Activated B cell treated with CpG ODN at 0.5 μM for 24 hours (primary cell): ENCODE measurements at regions of chrX and their contacts with region 1.

Region 1: GRCh38 chrX:41110801-41111625 is 25.8 kb downstream of the USP9X start:
- DNase-seq: no peak
- ATAC-seq: no peak
- H3K4me3 Mint-ChIP-seq: no peak overlapping the region
- H3K27ac Mint-ChIP-seq: peak overlapping the region; percentile 74
- H3K4me1 Mint-ChIP-seq: peaks cover 63% of the 10 kb centered on the region
- H3K27me3 Mint-ChIP-seq: no peaks in the 10 kb centered on the region
- CTCF ChIP-seq: no peak

Region 2: GRCh38 chrX:40188573-40189432 is 922.2 kb before region 1 on chrX:
- CTCF ChIA-PET with region 1: no interaction called
- POLR2A ChIA-PET with region 1: no interaction called
- intact Hi-C with region 1: no loop called
- DNase-seq: no peak
- ATAC-seq: no peak
- H3K4me3 Mint-ChIP-seq: no peak overlapping the region
- H3K27ac Mint-ChIP-seq: no peak overlapping the region
- H3K4me1 Mint-ChIP-seq: peaks cover 7% of the 10 kb centered on the region
- H3K27me3 Mint-ChIP-seq: no peaks in the 10 kb centered on the region
- CTCF ChIP-seq: no peak

Region 3: DNA sequence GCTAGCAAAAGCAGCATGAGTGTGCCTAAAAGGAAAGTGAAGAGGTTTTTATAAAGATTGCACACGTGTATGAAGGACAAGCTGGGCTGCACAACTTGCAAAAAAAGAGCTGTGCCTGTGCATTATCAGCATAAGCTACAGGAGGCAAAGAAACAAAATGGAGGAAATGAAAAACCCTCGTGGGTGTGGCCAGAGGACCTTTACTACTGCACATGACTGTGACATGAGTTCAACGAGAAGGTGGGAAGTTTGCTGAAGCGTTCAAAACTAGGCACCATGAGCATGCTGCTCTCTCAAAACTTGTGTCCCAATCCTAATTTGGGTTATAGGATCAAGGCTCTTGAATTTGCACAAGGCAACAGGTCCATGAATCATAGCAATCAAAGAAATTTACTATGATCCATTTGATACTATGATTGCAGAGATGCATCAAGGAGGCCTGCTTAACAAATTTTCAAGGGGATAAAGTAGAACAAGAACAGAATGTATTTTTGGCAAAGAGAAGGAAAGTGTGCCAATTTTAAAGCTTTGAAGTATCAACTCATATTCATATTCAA is 425.6 kb before region 1 on chrX:
- CTCF ChIA-PET with region 1: no interaction called
- POLR2A ChIA-PET with region 1: no interaction called
- intact Hi-C with region 1: no loop called
- DNase-seq: no peak
- ATAC-seq: peak; percentile 87
- H3K4me3 Mint-ChIP-seq: peak overlapping the region; percentile 2
- H3K27ac Mint-ChIP-seq: peak overlapping the region; percentile 56
- H3K4me1 Mint-ChIP-seq: peaks cover 22% of the 10 kb centered on the region
- H3K27me3 Mint-ChIP-seq: no peaks in the 10 kb centered on the region
- CTCF ChIP-seq: no peak

Region 4: DNA sequence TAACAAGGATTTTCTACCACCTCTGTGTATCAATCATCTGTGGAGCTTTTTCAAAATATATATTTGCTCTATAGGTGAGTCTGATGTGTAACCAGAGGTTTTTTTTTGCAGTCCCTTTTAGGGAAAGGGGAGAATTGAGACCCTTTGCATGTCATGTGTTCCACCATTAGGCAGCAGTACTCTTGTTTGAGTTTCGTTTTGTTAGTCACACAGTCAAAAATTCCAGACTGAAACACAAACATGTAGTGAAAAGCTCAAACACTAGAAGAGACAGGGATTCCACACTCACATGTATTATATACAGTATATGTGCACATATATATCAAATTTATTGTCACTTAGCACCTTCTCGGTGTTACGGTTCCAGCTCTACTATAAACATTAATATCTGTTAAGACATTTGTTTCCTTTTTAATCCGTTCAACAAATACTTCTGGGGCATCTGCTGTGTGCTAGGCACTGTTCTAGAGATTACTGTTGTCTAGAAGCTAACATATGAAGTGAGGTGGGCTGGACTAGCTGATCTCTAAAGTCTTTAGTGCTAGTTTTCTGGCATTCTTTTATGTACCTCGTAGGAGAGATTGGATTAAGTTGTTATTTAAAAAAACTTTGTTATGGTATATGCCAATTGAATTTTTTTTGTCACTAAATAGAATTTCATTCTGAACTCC is 20.3 kb before region 1 on chrX:
- CTCF ChIA-PET with region 1: interaction called, 16 read pairs
- POLR2A ChIA-PET with region 1: interaction called, 47 read pairs
- intact Hi-C with region 1: loop called (anchors 1 kb)
- DNase-seq: no peak
- ATAC-seq: no peak
- H3K4me3 Mint-ChIP-seq: no peak overlapping the region
- H3K27ac Mint-ChIP-seq: no peak overlapping the region
- H3K4me1 Mint-ChIP-seq: peaks cover 71% of the 10 kb centered on the region
- H3K27me3 Mint-ChIP-seq: no peaks in the 10 kb centered on the region
- CTCF ChIP-seq: no peak